ENCODE measurements at regions of chr7 and their contacts with region 1.

Region 1: GRCh38 chr7:23093546-23093945 is 12.0 kb upstream of the KLHL7 start:
- DNase-seq: no peak
- CTCF ChIP-seq: no peak

Region 2: GRCh38 chr7:23067271-23067670 is 26.3 kb before region 1 on chr7:
- CTCF ChIA-PET with region 1: no interaction called
- POLR2A ChIA-PET with region 1: no interaction called
- DNase-seq: no peak
- CTCF ChIP-seq: no peak

Region 3: DNA sequence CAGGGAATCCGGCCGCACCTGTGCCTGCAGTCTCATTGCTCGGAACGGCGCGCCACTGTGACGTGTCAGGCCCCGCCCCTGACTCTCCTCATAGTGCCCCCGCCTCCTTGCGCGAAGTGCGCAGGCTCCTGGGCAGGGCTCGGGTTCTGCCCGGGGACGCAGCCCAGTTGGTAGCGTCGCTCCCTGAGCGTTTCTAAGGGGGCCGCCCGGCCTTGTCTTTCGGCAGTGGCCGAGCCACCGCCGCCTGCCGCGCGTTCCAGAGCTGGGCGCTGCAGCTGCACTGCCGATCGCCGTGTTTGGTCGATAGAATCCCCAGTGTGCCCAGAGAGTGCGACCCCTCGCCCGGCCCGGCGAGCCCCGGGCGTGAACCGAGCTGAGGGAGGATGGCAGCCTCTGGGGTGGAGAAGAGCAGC is 12.1 kb after region 1 on chr7 and contains the start of gene KLHL7:
- CTCF ChIA-PET with region 1: interaction called, 90 read pairs
- POLR2A ChIA-PET with region 1: no interaction called
- DNase-seq: peak; percentile 95
- CTCF ChIP-seq: no peak